Common myeloid progenitor, CD34-positive (primary cell): ENCODE measurements at regions of chr5 and their contacts with region 1.

Region 1: GRCh38 chr5:178279725-178280438 is 47.3 kb upstream of the PHYKPL start:
- DNase-seq: peak; percentile 41 to 56 (median 51)
- H3K4me3 ChIP-seq: peak overlapping the region in 1 of 7 experiments; percentile 23
- H3K27ac ChIP-seq: no peak overlapping the region
- H3K4me1 ChIP-seq: peaks cover 0 to 18% (median 6%) of the 10 kb centered on the region in 4 experiments
- H3K27me3 ChIP-seq: peaks cover 0 to 4% (median 0%) of the 10 kb centered on the region in 5 experiments

Region 2: GRCh38 chr5:178234750-178235587 is 44.9 kb before region 1 on chr5:
- CTCF ChIA-PET with region 1: interaction called, 19 read pairs
- POLR2A ChIA-PET with region 1: no interaction called
- DNase-seq: peak; percentile 80 to 89 (median 88)
- H3K4me3 ChIP-seq: no peak overlapping the region
- H3K27ac ChIP-seq: no peak overlapping the region
- H3K4me1 ChIP-seq: peaks cover 12 to 93% (median 89%) of the 10 kb centered on the region in 4 experiments
- H3K27me3 ChIP-seq: no peaks in the 10 kb centered on the region

Region 3: DNA sequence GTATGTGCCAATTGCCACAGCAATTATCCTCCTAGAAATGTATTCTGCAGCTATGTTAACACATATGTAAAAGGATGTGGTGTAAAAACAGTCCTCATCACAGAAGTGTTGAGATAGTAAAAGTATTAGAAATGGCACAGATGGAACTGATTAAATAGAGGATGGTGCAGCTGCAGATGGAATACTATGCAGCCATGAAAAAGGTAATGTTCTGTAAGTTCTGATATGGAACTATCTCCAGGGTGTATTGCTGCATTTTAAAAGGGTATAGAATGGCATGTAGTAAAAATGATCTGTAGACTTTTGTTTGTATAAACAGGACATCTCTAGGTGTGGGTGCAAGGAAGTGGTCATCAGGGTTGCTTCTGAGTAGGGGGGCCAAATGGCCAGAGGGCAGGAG is 15.7 kb after region 1 on chr5:
- CTCF ChIA-PET with region 1: no interaction called
- POLR2A ChIA-PET with region 1: no interaction called
- DNase-seq: no peak
- H3K4me3 ChIP-seq: no peak overlapping the region
- H3K27ac ChIP-seq: no peak overlapping the region
- H3K4me1 ChIP-seq: no peaks in the 10 kb centered on the region
- H3K27me3 ChIP-seq: peaks cover 0 to 7% (median 0%) of the 10 kb centered on the region in 5 experiments

Region 4: GRCh38 chr5:178331399-178331996 is 51.6 kb after region 1 on chr5:
- CTCF ChIA-PET with region 1: no interaction called
- POLR2A ChIA-PET with region 1: no interaction called
- DNase-seq: no peak
- H3K4me3 ChIP-seq: no peak overlapping the region
- H3K27ac ChIP-seq: no peak overlapping the region
- H3K4me1 ChIP-seq: peaks cover 0 to 10% (median 2%) of the 10 kb centered on the region in 4 experiments
- H3K27me3 ChIP-seq: no peaks in the 10 kb centered on the region

Region 5: GRCh38 chr5:178551059-178551458 is 271.2 kb after region 1 on chr5:
- CTCF ChIA-PET with region 1: interaction called, 41 read pairs
- POLR2A ChIA-PET with region 1: no interaction called
- DNase-seq: peak; percentile 19 to 38 (median 37)
- H3K4me3 ChIP-seq: no peak overlapping the region
- H3K27ac ChIP-seq: no peak overlapping the region
- H3K4me1 ChIP-seq: no peaks in the 10 kb centered on the region
- H3K27me3 ChIP-seq: peaks cover 0 to 1% (median 0%) of the 10 kb centered on the region in 5 experiments

Region 6: DNA sequence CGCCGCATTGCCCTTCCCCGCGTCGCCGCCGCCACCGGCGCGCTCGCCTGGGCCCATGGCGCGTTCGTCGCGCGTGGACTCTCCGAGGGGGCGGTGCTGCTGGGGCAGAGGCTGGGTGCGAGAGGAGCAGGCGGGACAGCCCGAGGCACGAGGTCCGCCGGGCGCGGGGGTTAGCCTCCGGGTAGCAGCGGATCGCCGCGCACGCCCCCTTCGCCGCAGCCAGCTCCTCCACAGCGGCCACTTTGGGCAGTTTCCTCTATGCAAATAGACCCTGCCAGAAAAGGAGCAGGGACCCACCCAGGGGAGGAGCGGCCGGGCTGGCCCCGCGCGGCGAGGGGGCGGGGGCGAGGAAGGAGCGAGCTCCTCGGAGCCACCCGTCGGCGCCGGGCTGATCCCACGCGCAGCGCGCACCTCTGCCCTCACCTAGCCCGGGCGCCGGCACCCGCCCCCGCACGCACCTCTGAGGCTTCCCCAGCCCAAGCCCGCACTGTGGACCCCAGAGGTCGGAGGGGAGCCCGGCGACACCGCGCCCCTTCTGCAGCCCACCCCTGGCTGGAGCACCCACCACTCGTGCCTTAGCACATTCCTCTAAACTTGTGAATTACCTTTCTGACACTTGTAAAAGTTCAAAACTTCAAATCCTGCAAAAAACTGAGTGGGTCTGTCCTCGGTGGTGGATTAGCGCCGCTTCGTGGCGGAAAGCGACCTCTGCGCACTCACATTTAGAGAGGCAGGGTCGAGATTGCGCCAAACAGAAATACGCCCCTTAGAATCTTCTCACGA is 310.4 kb after region 1 on chr5 and contains the start of gene COL23A1:
- CTCF ChIA-PET with region 1: interaction called, 73 read pairs
- POLR2A ChIA-PET with region 1: no interaction called
- DNase-seq: peak; percentile 59 to 83 (median 81)
- H3K4me3 ChIP-seq: peak within 1 kb of the TSS; percentile 22 to 68 (median 58)
- H3K27ac ChIP-seq: no peak within 1 kb of the TSS
- H3K4me1 ChIP-seq: peaks cover 0 to 23% (median 18%) of the 10 kb centered on the region in 4 experiments
- H3K27me3 ChIP-seq: peaks cover 12 to 61% (median 20%) of the 10 kb centered on the region in 5 experiments